Activated CD4-positive, alpha-beta T cell treated with anti-CD3 and anti-CD28 coated beads, Interleukin-2, amount 10 ng/mL, durations not matched to agents 24 days and 14 days (primary cell): ENCODE measurements at regions of chr4 and their contacts with region 1.

Region 1: DNA sequence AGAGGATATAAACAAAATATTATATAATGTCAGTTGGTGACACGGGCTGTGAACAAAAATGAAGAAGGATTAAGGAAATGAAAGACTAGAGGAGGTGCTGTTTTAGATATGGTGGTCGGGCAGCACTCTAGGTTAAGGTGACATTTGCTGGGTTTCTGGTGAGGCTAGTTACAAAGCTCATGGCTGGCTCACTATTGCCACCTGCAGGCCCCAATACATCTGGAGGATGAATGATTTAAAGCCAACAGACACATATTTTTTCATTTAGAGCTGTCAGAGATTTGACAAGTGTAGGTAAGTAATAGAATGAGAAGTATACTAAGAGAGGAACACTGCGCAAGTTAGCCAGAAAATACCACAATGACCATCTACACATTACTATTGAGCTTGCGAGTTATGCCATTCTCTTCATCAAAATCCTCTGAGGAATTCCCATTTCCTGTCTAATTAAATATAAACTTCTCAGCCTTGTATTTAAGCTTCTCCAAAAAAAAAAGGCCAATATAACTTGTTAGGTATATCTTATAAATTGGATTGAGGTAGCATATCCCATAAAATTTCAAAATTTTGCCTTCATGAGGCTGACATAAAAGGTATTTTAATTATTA is 6.4 kb upstream of the FGG start:
- DNase-seq: peak; percentile 88
- H3K4me3 Mint-ChIP-seq: no peak overlapping the region
- H3K27ac Mint-ChIP-seq: no peak overlapping the region
- H3K4me1 Mint-ChIP-seq: peaks cover 12% of the 10 kb centered on the region
- H3K27me3 Mint-ChIP-seq: peaks cover 18% of the 10 kb centered on the region

Region 2: GRCh38 chr4:154526151-154526550 is 92.7 kb before region 1 on chr4:
- intact Hi-C with region 1: no loop called
- DNase-seq: no peak
- H3K4me3 Mint-ChIP-seq: no peak overlapping the region
- H3K27ac Mint-ChIP-seq: no peak overlapping the region
- H3K4me1 Mint-ChIP-seq: peaks cover 3% of the 10 kb centered on the region
- H3K27me3 Mint-ChIP-seq: peaks cover 24% of the 10 kb centered on the region

Region 3: DNA sequence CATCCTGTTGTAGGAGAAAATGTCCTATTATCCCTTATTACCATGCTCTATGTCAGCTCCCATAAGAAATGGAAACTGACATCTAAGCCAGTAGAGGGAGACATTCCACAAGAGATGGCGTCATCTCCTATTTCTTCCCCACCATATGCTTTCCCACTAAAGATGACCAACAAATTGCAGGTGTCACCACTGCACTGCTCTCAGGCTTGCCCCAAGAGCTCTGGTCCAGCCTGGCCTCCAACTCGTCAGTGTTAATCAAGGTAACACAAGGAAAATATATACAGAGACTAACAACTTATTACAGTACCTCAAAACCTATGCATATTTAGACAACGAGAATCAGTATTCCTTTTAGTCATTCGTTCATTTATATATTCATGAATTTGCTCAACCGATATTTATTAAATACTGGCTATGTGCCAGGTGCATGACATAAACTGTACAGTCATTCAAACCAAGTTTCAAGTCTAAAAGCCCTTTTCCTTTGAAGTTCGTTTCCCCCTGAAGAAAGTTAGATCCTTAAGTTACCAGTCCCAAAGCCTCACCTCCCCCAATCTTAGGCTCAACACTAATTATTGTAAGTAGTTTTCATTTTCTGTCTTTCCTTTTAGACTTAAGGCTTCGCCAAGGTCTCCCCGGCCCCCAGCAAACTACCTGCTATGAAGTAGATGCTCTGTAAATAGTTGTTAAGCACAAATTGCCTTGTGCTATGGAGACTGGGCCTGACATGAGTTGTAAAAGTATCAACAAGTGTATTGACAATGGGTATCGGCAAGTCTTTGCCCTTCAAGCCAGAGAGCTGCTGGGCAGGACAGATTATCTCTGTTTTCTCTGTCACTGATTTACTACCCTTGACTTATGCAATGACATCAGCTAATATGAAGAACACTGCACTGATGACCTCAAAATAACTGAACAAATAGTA is 59.1 kb before region 1 on chr4:
- intact Hi-C with region 1: loop called (anchors 1 kb)
- DNase-seq: peak; percentile 64
- H3K4me3 Mint-ChIP-seq: no peak overlapping the region
- H3K27ac Mint-ChIP-seq: no peak overlapping the region
- H3K4me1 Mint-ChIP-seq: peaks cover 4% of the 10 kb centered on the region
- H3K27me3 Mint-ChIP-seq: peaks cover 18% of the 10 kb centered on the region

Region 4: DNA sequence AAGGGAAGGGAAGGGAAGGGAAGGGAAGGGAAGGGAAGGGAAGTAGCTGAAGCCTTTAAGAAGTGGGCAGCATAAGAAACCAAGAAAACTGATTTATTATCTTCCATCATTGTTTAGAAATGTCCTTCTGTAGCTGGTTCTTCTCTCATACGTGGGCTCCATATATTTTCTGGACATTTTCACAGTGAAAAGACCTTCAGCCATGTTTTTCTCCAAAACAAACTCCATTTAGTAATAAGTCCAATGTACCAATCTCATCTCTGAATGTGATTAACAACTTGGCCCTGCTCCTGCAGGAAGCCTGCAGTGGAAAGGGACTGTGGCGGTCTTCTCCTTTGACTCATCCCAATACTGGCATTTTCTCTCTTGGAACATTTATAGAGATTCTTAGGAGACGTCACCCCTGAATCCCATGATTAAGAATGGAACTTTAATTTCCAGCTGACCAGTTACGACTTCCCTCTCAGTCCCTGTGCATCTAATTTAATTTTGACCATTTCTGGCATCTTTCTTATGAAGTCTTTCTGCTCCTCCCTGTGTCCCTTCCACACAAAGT is 951.2 kb after region 1 on chr4:
- intact Hi-C with region 1: no loop called
- DNase-seq: no peak
- H3K4me3 Mint-ChIP-seq: no peak overlapping the region
- H3K27ac Mint-ChIP-seq: no peak overlapping the region
- H3K4me1 Mint-ChIP-seq: peaks cover 3% of the 10 kb centered on the region
- H3K27me3 Mint-ChIP-seq: peaks cover 3% of the 10 kb centered on the region